Activated naive CD4-positive, alpha-beta T cell treated with anti-CD3 and anti-CD28 coated beads for 36 hours (primary cell): ENCODE measurements at regions of chr2 and their contacts with region 1.

Region 1: DNA sequence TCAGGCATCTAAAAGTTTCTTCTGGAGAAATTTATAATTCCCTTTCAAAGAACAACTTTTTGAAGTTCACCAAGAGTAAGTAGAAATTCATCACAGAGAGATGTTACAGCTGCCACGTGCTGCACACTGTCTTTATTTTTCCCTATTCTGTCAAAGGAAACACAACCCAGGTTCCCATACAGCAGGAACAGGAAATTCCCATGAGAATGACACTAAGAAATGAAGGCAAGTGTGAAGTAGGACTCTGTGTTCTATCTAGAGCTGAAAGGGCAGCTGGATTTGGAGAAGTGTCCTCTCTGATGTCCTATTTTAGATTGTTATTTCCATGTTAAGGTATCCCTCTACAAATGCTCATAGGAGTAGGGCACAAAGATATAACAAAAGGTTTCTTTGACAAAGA is 58.8 kb downstream of the PID1 start:
- DNase-seq: no peak
- H3K4me3 Mint-ChIP-seq: no peak overlapping the region
- H3K27ac Mint-ChIP-seq: no peak overlapping the region
- H3K4me1 Mint-ChIP-seq: no peaks in the 10 kb centered on the region
- H3K27me3 Mint-ChIP-seq: no peaks in the 10 kb centered on the region

Region 2: GRCh38 chr2:229098801-229099200 is 113.4 kb before region 1 on chr2:
- CTCF ChIA-PET with region 1: no interaction called
- intact Hi-C with region 1: no loop called
- DNase-seq: no peak
- H3K4me3 Mint-ChIP-seq: no peak overlapping the region
- H3K27ac Mint-ChIP-seq: no peak overlapping the region
- H3K4me1 Mint-ChIP-seq: no peaks in the 10 kb centered on the region
- H3K27me3 Mint-ChIP-seq: no peaks in the 10 kb centered on the region

Region 3: GRCh38 chr2:229578052-229578846 is 366.0 kb after region 1 on chr2:
- CTCF ChIA-PET with region 1: no interaction called
- intact Hi-C with region 1: loop called (anchors 5 kb)
- DNase-seq: no peak
- H3K4me3 Mint-ChIP-seq: no peak overlapping the region
- H3K27ac Mint-ChIP-seq: no peak overlapping the region
- H3K4me1 Mint-ChIP-seq: no peaks in the 10 kb centered on the region
- H3K27me3 Mint-ChIP-seq: peaks cover 18% of the 10 kb centered on the region

Region 4: DNA sequence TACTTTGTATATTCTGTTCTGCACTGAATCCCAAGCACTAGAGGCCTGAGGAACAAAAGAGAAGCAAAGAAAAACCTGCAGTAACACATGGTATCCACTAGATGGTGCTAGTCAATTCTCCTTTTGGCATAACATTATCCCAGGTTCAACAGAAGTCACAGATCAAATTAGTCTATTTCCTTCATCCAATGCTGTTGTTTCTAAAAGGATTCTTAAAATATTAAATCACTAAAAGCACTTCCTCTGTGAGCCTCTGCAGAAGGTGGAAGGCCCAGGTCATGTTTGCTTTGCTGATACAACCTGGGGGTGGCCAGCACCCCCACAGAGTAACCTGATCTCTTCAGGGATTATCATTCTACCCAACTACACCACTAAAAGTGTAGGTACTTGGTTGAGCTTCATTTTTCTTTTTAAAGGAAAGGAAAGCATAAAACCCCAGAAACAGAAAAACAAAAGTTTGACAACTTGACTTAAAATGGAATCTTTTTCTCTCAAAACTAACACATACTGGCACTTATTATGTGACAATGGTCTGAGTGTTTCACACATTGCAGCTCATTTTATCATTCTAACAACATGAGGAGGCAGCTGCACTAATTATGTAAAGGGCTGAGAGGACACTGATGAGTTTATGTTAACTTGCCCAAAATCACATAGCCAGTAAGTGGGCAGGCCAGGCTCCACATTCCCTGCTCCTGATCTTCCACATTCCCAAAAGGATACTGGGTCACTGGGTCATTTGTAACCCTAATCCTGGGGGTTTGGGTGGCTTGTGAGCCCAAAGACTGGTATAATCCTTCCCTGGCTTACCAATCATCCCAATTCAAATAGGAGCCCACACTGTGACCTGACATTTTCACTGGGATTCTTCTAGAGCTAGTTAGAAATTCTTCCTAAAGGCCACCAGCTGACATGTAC is 568.9 kb after region 1 on chr2:
- CTCF ChIA-PET with region 1: no interaction called
- intact Hi-C with region 1: no loop called
- DNase-seq: no peak
- H3K4me3 Mint-ChIP-seq: no peak overlapping the region
- H3K27ac Mint-ChIP-seq: no peak overlapping the region
- H3K4me1 Mint-ChIP-seq: peaks cover 11% of the 10 kb centered on the region
- H3K27me3 Mint-ChIP-seq: no peaks in the 10 kb centered on the region

Region 5: DNA sequence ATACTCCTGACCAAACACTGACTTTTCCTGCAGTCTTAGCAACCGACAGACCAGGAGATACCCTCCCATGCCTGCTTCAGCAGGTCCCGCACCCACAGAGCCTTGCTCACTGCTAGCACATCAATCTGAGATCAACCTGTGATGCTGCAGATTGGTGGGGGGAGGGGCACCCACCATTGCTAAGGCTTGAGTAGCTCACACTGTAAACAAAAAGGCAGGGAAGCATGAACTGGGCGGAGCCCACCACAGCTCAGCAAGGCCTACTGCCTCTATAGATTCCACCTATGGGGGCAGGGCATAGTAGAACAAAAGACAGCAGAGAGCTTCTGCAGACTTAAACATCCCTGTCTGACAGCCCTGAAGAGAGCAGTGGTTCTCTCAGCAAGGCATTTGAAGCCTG is 1313.4 kb after region 1 on chr2:
- CTCF ChIA-PET with region 1: no interaction called
- intact Hi-C with region 1: no loop called
- DNase-seq: no peak
- H3K4me3 Mint-ChIP-seq: no peak overlapping the region
- H3K27ac Mint-ChIP-seq: no peak overlapping the region
- H3K4me1 Mint-ChIP-seq: peaks cover 4% of the 10 kb centered on the region
- H3K27me3 Mint-ChIP-seq: no peaks in the 10 kb centered on the region